ENCODE measurements at regions of chr5 and their contacts with region 1.

Region 1: GRCh38 chr5:69093771-69094482 is at the start of gene SLC30A5:
- DNase-seq: peak; percentile 100
- ATAC-seq: peak; percentile 100
- H3K4me3 Mint-ChIP-seq: peak within 1 kb of the TSS; percentile 91
- H3K27ac Mint-ChIP-seq: peak within 1 kb of the TSS; percentile 90
- H3K4me1 Mint-ChIP-seq: peaks cover 48% of the 10 kb centered on the region
- H3K27me3 Mint-ChIP-seq: no peaks in the 10 kb centered on the region
- total RNA-seq, gene SLC30A5: 31.4 to 49.6 TPM

Region 2: DNA sequence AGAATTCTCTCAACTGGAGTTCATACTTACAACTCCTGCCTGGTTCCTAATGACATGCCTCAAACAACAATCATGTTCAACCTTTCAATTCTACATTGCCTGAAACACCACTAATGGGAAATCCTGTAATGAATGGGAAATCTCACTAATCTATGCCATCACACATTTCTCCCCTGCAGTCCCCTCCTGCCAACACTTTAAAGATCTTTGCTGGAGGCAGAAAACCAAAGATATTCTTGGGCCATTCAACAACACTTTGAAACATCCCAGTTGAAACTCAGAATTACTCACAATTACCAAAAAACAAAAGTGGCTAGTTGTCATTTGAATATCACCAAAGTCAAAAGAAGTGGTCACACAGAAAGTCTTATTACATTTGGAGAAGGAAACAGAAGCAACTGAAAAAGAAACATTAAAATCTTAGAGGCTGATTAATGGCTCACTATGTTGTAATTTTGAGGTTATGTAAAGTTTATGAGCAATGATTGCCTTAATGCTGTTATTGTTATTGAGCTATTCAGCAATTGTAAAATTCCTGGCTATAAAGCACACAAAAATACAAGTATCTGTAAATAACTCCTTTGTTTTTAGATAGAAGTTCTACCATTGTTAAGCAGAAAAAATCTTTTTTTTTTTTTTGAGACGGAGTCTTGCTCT is 313.5 kb before region 1 on chr5:
- CTCF ChIA-PET with region 1: no interaction called
- DNase-seq: no peak
- ATAC-seq: no peak
- H3K4me3 Mint-ChIP-seq: no peak overlapping the region
- H3K27ac Mint-ChIP-seq: no peak overlapping the region
- H3K4me1 Mint-ChIP-seq: peaks cover 3% of the 10 kb centered on the region
- H3K27me3 Mint-ChIP-seq: peaks cover 6% of the 10 kb centered on the region

Region 3: GRCh38 chr5:68991279-68992084 is 102.4 kb before region 1 on chr5:
- CTCF ChIA-PET with region 1: no interaction called
- DNase-seq: no peak
- ATAC-seq: no peak
- H3K4me3 Mint-ChIP-seq: no peak overlapping the region
- H3K27ac Mint-ChIP-seq: no peak overlapping the region
- H3K4me1 Mint-ChIP-seq: peaks cover 24% of the 10 kb centered on the region
- H3K27me3 Mint-ChIP-seq: peaks cover under 1% of the 10 kb centered on the region

Region 4: DNA sequence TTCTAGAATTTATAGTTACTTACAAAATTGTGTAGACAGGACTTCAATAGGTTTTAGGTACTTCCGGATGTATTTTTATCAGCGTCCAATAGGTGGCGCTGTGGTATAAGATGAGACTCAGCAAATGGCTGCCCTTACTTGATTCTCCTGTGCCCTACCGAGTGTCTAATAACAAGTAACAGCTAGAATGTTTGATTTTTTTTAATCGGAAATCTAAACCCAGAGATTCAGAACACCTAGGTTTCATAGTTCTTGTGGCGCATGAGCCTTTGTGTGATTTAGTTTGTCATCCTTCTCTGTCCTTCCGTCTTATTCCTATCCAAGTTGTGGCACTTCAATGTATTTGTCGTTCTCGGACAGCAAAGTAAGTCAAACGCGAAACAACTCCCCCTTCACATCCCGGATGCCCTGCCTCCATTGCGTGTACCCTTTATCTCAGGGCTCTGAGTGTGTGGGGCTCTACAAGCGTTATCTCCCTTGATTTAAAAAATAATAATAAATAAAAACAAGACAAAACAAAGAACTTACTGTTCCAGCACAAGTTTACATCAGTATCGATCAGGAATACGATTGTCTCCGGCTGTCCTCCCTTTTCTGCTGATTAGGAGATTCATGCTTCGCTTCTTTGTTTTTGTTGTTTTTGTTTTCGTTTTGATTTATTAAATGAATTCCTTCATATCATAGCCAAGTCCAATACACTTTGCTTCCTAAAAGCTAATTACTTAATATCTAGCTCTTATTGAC is 50.8 kb before region 1 on chr5:
- CTCF ChIA-PET with region 1: interaction called, 25 read pairs
- DNase-seq: peak; percentile 87
- ATAC-seq: peak; percentile 97
- H3K4me3 Mint-ChIP-seq: peak overlapping the region; percentile 78
- H3K27ac Mint-ChIP-seq: peak overlapping the region; percentile 89
- H3K4me1 Mint-ChIP-seq: peaks cover 17% of the 10 kb centered on the region
- H3K27me3 Mint-ChIP-seq: no peaks in the 10 kb centered on the region

Region 5: GRCh38 chr5:69083412-69083811 is 10.5 kb before region 1 on chr5:
- CTCF ChIA-PET with region 1: interaction called, 31 read pairs
- DNase-seq: no peak
- ATAC-seq: no peak
- H3K4me3 Mint-ChIP-seq: no peak overlapping the region
- H3K27ac Mint-ChIP-seq: no peak overlapping the region
- H3K4me1 Mint-ChIP-seq: peaks cover 22% of the 10 kb centered on the region
- H3K27me3 Mint-ChIP-seq: no peaks in the 10 kb centered on the region

Region 6: GRCh38 chr5:69105996-69106906 is 12.3 kb after region 1 on chr5:
- CTCF ChIA-PET with region 1: interaction called, 10 read pairs
- DNase-seq: no peak
- ATAC-seq: no peak
- H3K4me3 Mint-ChIP-seq: no peak overlapping the region
- H3K27ac Mint-ChIP-seq: no peak overlapping the region
- H3K4me1 Mint-ChIP-seq: peaks cover 3% of the 10 kb centered on the region
- H3K27me3 Mint-ChIP-seq: no peaks in the 10 kb centered on the region

Region 7: DNA sequence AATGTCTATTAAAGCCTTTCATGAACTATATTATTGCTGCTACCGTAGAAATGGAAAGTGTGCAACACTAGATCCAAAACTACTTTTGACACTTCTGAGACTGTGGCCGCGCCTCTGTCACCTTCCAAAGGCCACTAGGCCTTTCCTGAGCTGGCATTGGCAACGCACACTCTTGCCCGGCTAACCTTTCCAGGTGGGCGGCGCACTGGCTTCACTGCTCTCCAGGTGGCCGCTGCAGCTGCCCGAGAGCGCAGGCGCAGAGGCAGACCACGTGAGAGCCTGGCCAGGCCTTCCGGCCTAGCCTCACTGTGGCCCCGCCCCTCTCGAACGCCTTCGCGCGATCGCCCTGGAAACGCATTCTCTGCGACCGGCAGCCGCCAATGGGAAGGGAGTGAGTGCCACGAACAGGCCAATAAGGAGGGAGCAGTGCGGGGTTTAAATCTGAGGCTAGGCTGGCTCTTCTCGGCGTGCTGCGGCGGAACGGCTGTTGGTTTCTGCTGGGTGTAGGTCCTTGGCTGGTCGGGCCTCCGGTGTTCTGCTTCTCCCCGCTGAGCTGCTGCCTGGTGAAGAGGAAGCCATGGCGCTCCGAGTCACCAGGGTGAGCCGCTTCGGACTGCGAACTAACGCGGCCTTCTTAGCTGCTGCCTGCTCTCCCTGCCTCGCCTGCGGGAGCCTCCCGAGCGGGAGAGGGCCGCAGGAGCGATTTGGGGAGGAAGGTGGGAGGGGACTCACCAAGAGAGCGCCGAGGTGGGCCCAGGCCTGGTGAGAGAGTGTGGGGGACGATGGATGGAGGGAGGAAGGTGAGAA is 73.0 kb after region 1 on chr5 and contains the start of gene CCNB1:
- CTCF ChIA-PET with region 1: interaction called, 18 read pairs
- DNase-seq: peak; percentile 99
- ATAC-seq: peak; percentile 99
- H3K4me3 Mint-ChIP-seq: peak within 1 kb of the TSS; percentile 96
- H3K27ac Mint-ChIP-seq: peak within 1 kb of the TSS; percentile 92
- H3K4me1 Mint-ChIP-seq: peaks cover 48% of the 10 kb centered on the region
- H3K27me3 Mint-ChIP-seq: no peaks in the 10 kb centered on the region
- total RNA-seq, gene CCNB1: 171 to 206 TPM

Region 8: GRCh38 chr5:69334793-69335268 is 240.9 kb after region 1 on chr5:
- CTCF ChIA-PET with region 1: interaction called, 43 read pairs
- DNase-seq: peak; percentile 87
- ATAC-seq: peak; percentile 72
- H3K4me3 Mint-ChIP-seq: no peak overlapping the region
- H3K27ac Mint-ChIP-seq: no peak overlapping the region
- H3K4me1 Mint-ChIP-seq: peaks cover 18% of the 10 kb centered on the region
- H3K27me3 Mint-ChIP-seq: no peaks in the 10 kb centered on the region